Ascending aorta (tissue), 2 donors: ENCODE measurements at regions of chr3 and their contacts with region 1.

Region 1: GRCh38 chr3:48400824-48401433 is 28.9 kb downstream of the FBXW12 start:
- DNase-seq: peak in 1 of 2 donors; percentile 75
- H3K4me3 ChIP-seq: no peak overlapping the region
- H3K27ac ChIP-seq: peak overlapping the region; percentile 80 to 89
- H3K4me1 ChIP-seq: peaks cover 28 to 34% of the 10 kb centered on the region in 2 donors
- H3K27me3 ChIP-seq: no peaks in the 10 kb centered on the region
- CTCF ChIP-seq: peak; percentile 82 to 85 (median 85)

Region 2: GRCh38 chr3:48273594-48274211 is 127.2 kb before region 1 on chr3:
- intact Hi-C with region 1: loop called (anchors 1 kb)
- DNase-seq: peak in 1 of 2 donors; percentile 68
- H3K4me3 ChIP-seq: no peak overlapping the region
- H3K27ac ChIP-seq: no peak overlapping the region
- H3K4me1 ChIP-seq: no peaks in the 10 kb centered on the region
- H3K27me3 ChIP-seq: no peaks in the 10 kb centered on the region
- CTCF ChIP-seq: peak; percentile 68 to 79 (median 74)

Region 3: GRCh38 chr3:48429317-48429959 is 28.5 kb after region 1 on chr3:
- intact Hi-C with region 1: loop called (anchors 1 kb)
- DNase-seq: no peak
- H3K4me3 ChIP-seq: peak overlapping the region; percentile 79 to 94
- H3K27ac ChIP-seq: peak overlapping the region; percentile 95 to 98
- H3K4me1 ChIP-seq: peaks cover 12 to 32% of the 10 kb centered on the region in 2 donors
- H3K27me3 ChIP-seq: no peaks in the 10 kb centered on the region
- CTCF ChIP-seq: no peak

Region 4: GRCh38 chr3:48439820-48440589 is 39.1 kb after region 1 on chr3 and contains the starts of genes CCDC51 and TMA7:
- intact Hi-C with region 1: loop called (anchors 1 kb)
- DNase-seq: peak; percentile 94 to 99
- H3K4me3 ChIP-seq: peak within 1 kb of the TSS; percentile 81 to 89
- H3K27ac ChIP-seq: peak within 1 kb of the TSS; percentile 95
- H3K4me1 ChIP-seq: peaks cover 6 to 18% of the 10 kb centered on the region in 2 donors
- H3K27me3 ChIP-seq: no peaks in the 10 kb centered on the region
- CTCF ChIP-seq: no peak
- total RNA-seq, gene CCDC51: 19.3 TPM
- total RNA-seq, gene TMA7: 142 TPM

Region 5: GRCh38 chr3:48507351-48508061 is 106.6 kb after region 1 on chr3:
- intact Hi-C with region 1: loop called (anchors 5 kb)
- DNase-seq: peak; percentile 35 to 81
- H3K4me3 ChIP-seq: no peak overlapping the region
- H3K27ac ChIP-seq: peak overlapping the region; percentile 69 to 76
- H3K4me1 ChIP-seq: peaks cover 0 to 23% of the 10 kb centered on the region in 2 donors
- H3K27me3 ChIP-seq: no peaks in the 10 kb centered on the region
- CTCF ChIP-seq: peak; percentile 34 to 58 (median 52)

Region 6: DNA sequence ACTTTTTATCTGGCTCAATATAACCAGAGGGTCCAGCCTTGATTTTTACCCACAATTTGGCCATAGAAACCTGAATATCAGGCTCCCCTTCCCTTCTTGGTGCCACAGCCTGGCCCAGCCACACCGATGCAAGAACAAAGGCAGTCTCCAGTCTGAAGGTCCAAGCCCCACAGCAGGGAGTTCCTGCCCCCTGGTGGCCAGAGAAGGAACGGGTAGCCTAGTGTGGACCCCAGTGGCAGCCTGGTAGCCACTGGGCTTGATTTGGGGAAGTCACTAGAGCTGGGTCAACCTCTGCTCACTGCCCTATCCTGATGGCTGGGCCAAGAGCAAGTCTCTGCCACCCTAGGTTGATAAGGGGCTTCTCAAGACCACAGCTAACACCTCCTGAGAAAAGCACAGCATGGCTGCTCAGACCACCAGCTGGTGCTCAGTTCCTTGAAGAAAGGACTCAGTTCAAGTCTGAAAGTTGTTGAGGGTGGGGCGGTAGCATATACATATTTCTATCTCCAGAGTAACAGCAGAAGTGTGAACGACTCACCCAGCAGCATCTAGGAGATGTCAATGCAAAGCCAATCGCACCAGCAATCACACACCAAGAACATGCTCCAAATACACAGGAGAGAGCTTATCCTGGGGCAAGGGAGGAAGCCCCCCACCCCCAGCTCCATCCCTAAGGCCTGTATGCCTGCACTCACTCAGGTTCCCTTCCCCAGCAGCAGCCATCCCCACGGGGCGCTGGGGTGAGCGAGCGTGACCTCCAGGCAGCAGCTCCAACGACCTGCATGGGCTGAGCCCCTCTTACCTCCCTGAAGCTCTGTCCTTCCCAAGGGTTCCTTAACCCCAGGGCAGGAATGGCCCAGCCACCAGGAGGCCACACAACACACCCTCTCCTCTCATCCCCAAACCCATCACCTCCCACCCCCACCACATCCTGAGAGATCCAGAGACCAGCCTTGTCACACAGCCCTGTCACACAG is 148.1 kb after region 1 on chr3:
- intact Hi-C with region 1: loop called (anchors 2 kb)
- DNase-seq: peak; percentile 46 to 94
- H3K4me3 ChIP-seq: no peak overlapping the region
- H3K27ac ChIP-seq: no peak overlapping the region
- H3K4me1 ChIP-seq: no peaks in the 10 kb centered on the region
- H3K27me3 ChIP-seq: no peaks in the 10 kb centered on the region
- CTCF ChIP-seq: peak; percentile 91 to 96 (median 94)